ENCODE measurements at regions of chr1 and their contacts with region 1.

Region 1: GRCh38 chr1:53393325-53393792 is 65.5 kb upstream of the LRP8 start:
- DNase-seq: peak; percentile 86
- H3K4me3 ChIP-seq: peak overlapping the region in 1 of 2 experiments; percentile 2; a peak in 1 of 4 replicates
- H3K27ac ChIP-seq: no peak overlapping the region
- H3K4me1 ChIP-seq: peaks cover 0 to 44% of the 10 kb centered on the region in 2 experiments; a peak in 2 of 4 replicates
- H3K27me3 ChIP-seq: peaks cover 2% of the 10 kb centered on the region; the same call in 1 of the 2 replicates
- CTCF ChIP-seq: peak; percentile 89
- EP300 ChIP-seq: 0 out of 4 replicates have a peak, but pooled peaks of 1 of the 2 experiments have one; percentile 10
- RAD21 ChIP-seq: peak; percentile 97

Region 2: DNA sequence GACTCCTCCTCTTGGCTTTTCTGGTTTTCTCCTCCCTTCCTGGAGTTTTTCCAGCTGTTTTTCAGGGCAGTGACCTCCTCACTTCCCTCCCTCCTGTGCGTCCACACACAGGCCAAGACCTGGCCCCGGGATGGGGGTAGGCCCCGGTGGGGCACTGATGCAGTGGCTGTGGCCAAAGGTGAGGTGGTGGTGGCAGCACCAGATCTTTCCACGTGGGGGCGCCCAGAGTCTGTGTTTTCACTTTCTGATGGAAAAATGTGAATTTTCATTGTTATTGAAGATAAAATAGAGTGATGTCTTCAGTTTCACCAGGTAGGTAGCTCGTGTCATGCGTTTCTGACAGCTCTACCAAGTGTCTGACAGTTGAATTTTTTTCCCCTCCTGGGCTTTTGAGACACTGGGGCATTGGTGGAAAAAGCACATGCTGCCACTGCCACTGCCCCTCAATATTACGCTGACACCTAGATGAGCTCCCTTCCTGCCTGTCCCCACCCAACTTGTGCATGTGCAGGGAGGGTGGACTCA is 115.1 kb before region 1 on chr1:
- CTCF ChIA-PET with region 1: interaction called, 410 read pairs
- POLR2A ChIA-PET with region 1: interaction called, 3 read pairs
- DNase-seq: peak; percentile 89
- H3K4me3 ChIP-seq: no peak overlapping the region; a peak in 1 of 4 replicates
- H3K27ac ChIP-seq: no peak overlapping the region
- H3K4me1 ChIP-seq: peaks cover 0 to 10% of the 10 kb centered on the region in 2 experiments; a peak in 1 of 4 replicates
- H3K27me3 ChIP-seq: no peaks in the 10 kb centered on the region
- CTCF ChIP-seq: peak; percentile 93
- EP300 ChIP-seq: no peak
- RAD21 ChIP-seq: peak; percentile 95

Region 3: DNA sequence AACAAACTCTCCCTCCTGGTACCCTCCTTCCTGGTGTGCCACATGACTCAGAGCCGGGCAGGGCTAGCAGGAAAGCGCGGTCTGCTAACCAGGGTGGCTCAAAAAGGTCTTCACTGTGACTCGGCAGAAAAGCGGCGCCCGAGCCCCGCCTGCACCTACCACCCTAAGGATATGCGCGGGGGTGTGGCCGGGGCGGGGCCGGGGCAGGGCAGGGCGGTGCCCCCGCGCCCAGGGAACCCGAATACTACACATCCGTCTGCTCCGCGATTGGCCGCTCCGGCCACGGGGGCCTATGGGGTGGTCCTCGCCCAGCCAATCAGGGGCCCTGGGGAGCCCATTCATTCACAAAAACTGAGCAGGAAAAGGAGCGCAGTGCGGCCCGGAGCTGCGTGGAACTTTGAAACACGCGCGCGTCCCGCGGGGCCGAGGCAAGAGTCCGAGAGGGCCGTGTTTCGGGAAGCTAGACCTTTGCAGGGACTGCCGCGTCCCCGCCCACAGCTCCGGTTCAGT is 67.2 kb before region 1 on chr1:
- CTCF ChIA-PET with region 1: interaction called, 18 read pairs
- POLR2A ChIA-PET with region 1: no interaction called
- DNase-seq: peak; percentile 96
- H3K4me3 ChIP-seq: peak overlapping the region; percentile 76 to 96
- H3K27ac ChIP-seq: peak overlapping the region; percentile 72 to 81
- H3K4me1 ChIP-seq: peaks cover 0 to 29% of the 10 kb centered on the region in 2 experiments; a peak in 2 of 4 replicates
- H3K27me3 ChIP-seq: no peaks in the 10 kb centered on the region
- CTCF ChIP-seq: no peak
- EP300 ChIP-seq: no peak
- RAD21 ChIP-seq: no peak; the same call in 1 of the 2 replicates

Region 4: DNA sequence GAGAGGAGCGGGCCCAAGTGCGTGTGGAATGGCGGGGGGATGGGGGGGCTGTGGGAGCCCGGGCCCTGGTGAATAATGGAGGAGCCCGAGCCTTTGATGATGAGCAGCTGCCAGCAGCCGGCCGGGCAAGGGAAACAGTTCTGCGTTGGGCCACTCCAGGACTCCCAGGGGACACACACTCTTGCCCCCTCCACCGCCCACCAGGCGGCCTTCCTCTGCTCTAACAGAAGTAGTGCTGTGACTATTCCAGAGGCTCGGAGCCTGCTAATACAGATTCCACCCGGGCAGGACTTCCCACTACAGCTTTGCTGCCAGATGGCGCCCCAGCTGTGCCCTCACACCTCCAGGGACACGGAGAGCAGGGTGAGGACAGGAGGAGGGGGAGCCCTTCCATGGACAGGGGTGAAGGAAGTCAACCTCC is 17.3 kb before region 1 on chr1:
- CTCF ChIA-PET with region 1: interaction called, 15 read pairs
- POLR2A ChIA-PET with region 1: interaction called, 3 read pairs
- DNase-seq: peak; percentile 56
- H3K4me3 ChIP-seq: no peak overlapping the region
- H3K27ac ChIP-seq: no peak overlapping the region
- H3K4me1 ChIP-seq: peaks cover 0 to 13% of the 10 kb centered on the region in 2 experiments; a peak in 1 of 4 replicates
- H3K27me3 ChIP-seq: no peaks in the 10 kb centered on the region
- CTCF ChIP-seq: no peak
- EP300 ChIP-seq: no peak
- RAD21 ChIP-seq: no peak

Region 5: DNA sequence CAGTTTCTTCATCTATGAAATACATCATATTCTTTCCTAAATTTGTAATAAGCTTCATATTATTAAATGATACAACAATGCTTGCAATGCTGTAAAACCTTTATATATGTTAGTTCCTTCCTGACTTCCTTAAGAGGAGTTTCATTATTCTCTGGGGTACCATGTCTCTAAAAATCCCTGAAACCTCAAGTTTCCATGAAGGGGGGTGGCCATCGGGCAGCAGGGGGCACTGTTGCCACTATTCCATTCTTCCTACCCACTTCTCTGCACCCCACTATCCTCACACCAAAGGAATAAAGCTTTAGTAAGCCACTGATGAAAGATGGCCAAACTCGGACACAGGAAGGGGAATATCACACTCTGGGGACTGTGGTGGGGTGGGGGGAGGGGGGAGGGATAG is 56.9 kb after region 1 on chr1:
- CTCF ChIA-PET with region 1: interaction called, 13 read pairs
- POLR2A ChIA-PET with region 1: no interaction called
- DNase-seq: peak; percentile 62
- H3K4me3 ChIP-seq: no peak overlapping the region
- H3K27ac ChIP-seq: no peak overlapping the region
- H3K4me1 ChIP-seq: peaks cover 0 to 11% of the 10 kb centered on the region in 2 experiments; a peak in 1 of 4 replicates
- H3K27me3 ChIP-seq: no peaks in the 10 kb centered on the region
- CTCF ChIP-seq: peak; percentile 55
- EP300 ChIP-seq: no peak
- RAD21 ChIP-seq: peak; percentile 63